ENCODE measurements at regions of chr17 and their contacts with region 1.

Region 1: GRCh38 chr17:32331243-32332040 is 10.5 kb downstream of the C17orf75 start:
- DNase-seq: no peak
- H3K4me3 ChIP-seq: no peak overlapping the region
- H3K4me3 Mint-ChIP-seq: peak overlapping the region in 6 of 7 donors; percentile 28 to 74 (median 52)
- H3K27ac ChIP-seq: no peak overlapping the region
- H3K27ac Mint-ChIP-seq: peak overlapping the region; percentile 45 to 93 (median 77)
- H3K4me1 ChIP-seq: peaks cover 22% of the 10 kb centered on the region
- H3K4me1 Mint-ChIP-seq: peaks cover 20 to 22% (median 22%) of the 10 kb centered on the region in 3 donors
- H3K27me3 ChIP-seq: no peaks in the 10 kb centered on the region
- H3K27me3 Mint-ChIP-seq: no peaks in the 10 kb centered on the region

Region 2: GRCh38 chr17:32174889-32175288 is 156.6 kb before region 1 on chr17:
- CTCF ChIA-PET with region 1: no interaction called
- POLR2A ChIA-PET with region 1: no interaction called
- DNase-seq: no peak
- H3K4me3 ChIP-seq: no peak overlapping the region
- H3K4me3 Mint-ChIP-seq: no peak overlapping the region
- H3K27ac ChIP-seq: no peak overlapping the region
- H3K27ac Mint-ChIP-seq: peak overlapping the region in 3 of 8 donors; percentile 11 to 73 (median 37)
- H3K4me1 ChIP-seq: no peaks in the 10 kb centered on the region
- H3K4me1 Mint-ChIP-seq: peaks cover 0 to 6% (median 0%) of the 10 kb centered on the region in 3 donors
- H3K27me3 ChIP-seq: no peaks in the 10 kb centered on the region
- H3K27me3 Mint-ChIP-seq: no peaks in the 10 kb centered on the region

Region 3: DNA sequence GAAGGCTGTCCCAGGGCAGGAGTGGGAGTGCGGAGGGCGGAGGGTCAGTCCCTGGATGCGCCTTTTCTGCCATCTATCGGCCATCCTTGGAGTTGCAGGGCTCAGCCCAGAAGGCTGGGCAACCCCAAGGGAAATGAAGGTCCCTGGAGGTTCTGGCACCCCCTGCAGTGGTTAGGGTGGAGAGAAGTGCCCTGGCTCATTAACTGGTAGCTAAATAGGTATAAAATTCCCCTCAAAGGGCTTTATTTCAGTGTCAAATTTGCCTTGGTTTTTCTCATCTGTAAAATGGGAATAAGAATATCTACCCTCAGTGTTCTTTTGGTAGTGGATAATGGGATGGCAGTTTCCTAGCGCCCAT is 11.9 kb before region 1 on chr17:
- CTCF ChIA-PET with region 1: interaction called, 15 read pairs
- POLR2A ChIA-PET with region 1: no interaction called
- DNase-seq: peak; percentile 54 to 75 (median 65)
- H3K4me3 ChIP-seq: no peak overlapping the region
- H3K4me3 Mint-ChIP-seq: peak overlapping the region in 6 of 7 donors; percentile 64 to 88 (median 77)
- H3K27ac ChIP-seq: no peak overlapping the region
- H3K27ac Mint-ChIP-seq: peak overlapping the region in 2 of 8 donors; percentile 35 to 92
- H3K4me1 ChIP-seq: peaks cover 11% of the 10 kb centered on the region
- H3K4me1 Mint-ChIP-seq: peaks cover 4 to 18% (median 10%) of the 10 kb centered on the region in 3 donors
- H3K27me3 ChIP-seq: no peaks in the 10 kb centered on the region
- H3K27me3 Mint-ChIP-seq: peaks cover 5 to 8% of the 10 kb centered on the region in 2 donors

Measured in CD8-positive, alpha-beta memory T cell (primary cell).